CD4-positive, alpha-beta T cell (primary cell): ENCODE measurements at regions of chr12 and their contacts with region 1.

Region 1: GRCh38 chr12:67268896-67269631 is at the start of gene CAND1:
- DNase-seq: peak; percentile 90 to 99 (median 94)
- ATAC-seq: peak; percentile 77
- H3K4me3 ChIP-seq: peak within 1 kb of the TSS; percentile 91
- H3K4me3 Mint-ChIP-seq: peak within 1 kb of the TSS; percentile 94
- H3K27ac ChIP-seq: peak within 1 kb of the TSS; percentile 96 to 98
- H3K27ac Mint-ChIP-seq: peak within 1 kb of the TSS; percentile 97
- H3K4me1 ChIP-seq: peaks cover 24% of the 10 kb centered on the region
- H3K4me1 Mint-ChIP-seq: peaks cover 50% of the 10 kb centered on the region
- H3K27me3 ChIP-seq: no peaks in the 10 kb centered on the region
- H3K27me3 Mint-ChIP-seq: no peaks in the 10 kb centered on the region
- CTCF ChIP-seq: no peak
- total RNA-seq, gene CAND1: 118 to 124 TPM

Region 2: DNA sequence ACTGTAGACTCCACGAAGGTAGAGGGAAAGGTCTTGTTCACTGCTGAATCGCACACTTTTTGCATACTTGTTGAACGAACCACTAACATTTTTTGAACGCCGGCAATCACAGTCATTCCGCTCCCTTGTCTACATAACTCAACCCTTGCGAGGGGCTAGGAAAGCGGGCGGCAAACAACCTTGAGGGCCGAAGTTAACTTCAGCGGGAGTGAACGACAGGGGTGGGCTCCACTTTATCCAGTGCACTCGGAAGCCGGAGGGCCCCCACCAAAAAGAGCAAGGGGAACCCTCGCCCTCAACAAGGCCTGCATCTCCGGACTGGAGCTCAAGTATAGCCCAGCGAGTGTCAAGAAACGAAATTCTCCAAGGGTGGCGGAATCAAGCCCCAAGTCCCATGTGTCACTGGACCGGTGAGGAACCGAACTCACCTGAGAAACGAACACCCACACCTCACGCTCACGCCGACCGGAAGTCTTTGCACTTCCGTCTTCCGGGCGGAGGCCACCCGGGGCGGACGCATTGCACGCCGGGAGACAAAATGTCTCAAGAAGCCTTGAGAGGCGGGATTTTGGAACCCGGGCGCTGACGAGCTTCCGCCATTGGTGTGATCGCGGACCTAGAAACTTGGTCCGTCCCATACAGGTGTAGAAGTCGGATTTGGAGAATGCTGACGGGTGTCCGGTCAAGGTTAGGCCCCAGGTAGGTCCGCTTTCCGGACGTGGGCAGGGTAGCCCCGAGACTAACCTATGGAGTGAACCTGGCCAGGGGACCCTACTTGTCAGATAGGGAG is 1138.6 kb before region 1 on chr12 and contains the start of gene LLPH:
- CTCF ChIA-PET with region 1: no interaction called
- POLR2A ChIA-PET with region 1: interaction called, 9 read pairs
- intact Hi-C with region 1: loop called in 1 of 2 experiments (anchors 5 kb)
- DNase-seq: peak; percentile 78 to 94 (median 84)
- ATAC-seq: peak; percentile 90
- H3K4me3 ChIP-seq: peak within 1 kb of the TSS; percentile 96
- H3K4me3 Mint-ChIP-seq: peak within 1 kb of the TSS; percentile 95
- H3K27ac ChIP-seq: peak within 1 kb of the TSS; percentile 77 to 89
- H3K27ac Mint-ChIP-seq: peak within 1 kb of the TSS; percentile 96
- H3K4me1 ChIP-seq: peaks cover 13% of the 10 kb centered on the region
- H3K4me1 Mint-ChIP-seq: peaks cover 71% of the 10 kb centered on the region
- H3K27me3 ChIP-seq: no peaks in the 10 kb centered on the region
- H3K27me3 Mint-ChIP-seq: no peaks in the 10 kb centered on the region
- CTCF ChIP-seq: no peak
- total RNA-seq, gene LLPH: 27.3 to 31.0 TPM

Region 3: DNA sequence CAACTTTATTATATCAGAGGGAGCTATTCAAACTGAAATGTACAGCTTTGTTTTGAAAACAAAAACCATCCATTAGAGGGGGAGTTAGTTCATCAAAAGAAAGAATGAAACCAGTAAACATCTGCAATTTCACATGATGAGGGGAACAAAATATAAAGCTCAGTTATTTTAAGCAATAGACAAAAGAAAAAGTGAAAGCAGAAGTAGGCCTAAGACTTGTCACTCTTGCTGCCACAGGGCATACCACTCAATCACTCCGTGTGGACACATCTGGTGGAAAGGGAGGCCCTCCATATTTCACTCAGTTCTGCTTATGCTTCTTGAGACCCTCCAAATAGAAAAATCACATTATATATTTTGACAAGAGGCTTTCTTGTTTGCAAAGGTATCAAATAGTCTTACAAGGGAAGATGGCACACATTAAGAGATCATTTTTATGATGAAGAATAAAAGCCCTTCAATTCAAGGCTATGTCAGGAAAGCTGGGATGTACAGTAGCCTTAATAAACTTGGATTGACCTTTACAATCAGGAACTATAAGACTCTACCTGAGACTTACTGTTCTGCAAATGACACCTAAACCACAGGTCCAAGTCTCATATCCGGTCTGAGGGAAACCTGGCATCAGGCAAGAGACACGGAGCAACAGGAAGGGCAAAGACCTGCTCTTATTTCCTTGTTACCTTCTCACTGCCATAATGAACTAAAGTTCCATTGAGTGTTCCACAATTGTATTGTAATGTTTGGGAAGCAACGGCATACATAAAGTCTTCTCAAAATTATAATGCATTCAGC is 367.7 kb before region 1 on chr12:
- CTCF ChIA-PET with region 1: no interaction called
- POLR2A ChIA-PET with region 1: interaction called, 14 read pairs
- intact Hi-C with region 1: loop called in 1 of 2 experiments (anchors 10 kb)
- DNase-seq: peak in 4 of 14 experiments; percentile 12 to 43 (median 22)
- ATAC-seq: peak; percentile 41
- H3K4me3 ChIP-seq: no peak overlapping the region
- H3K4me3 Mint-ChIP-seq: peak overlapping the region; percentile 71
- H3K27ac ChIP-seq: no peak overlapping the region
- H3K27ac Mint-ChIP-seq: peak overlapping the region; percentile 32
- H3K4me1 ChIP-seq: no peaks in the 10 kb centered on the region
- H3K4me1 Mint-ChIP-seq: peaks cover 47% of the 10 kb centered on the region
- H3K27me3 ChIP-seq: no peaks in the 10 kb centered on the region
- H3K27me3 Mint-ChIP-seq: no peaks in the 10 kb centered on the region
- CTCF ChIP-seq: no peak

Region 4: GRCh38 chr12:67042697-67043131 is 226.3 kb before region 1 on chr12:
- CTCF ChIA-PET with region 1: no interaction called
- POLR2A ChIA-PET with region 1: no interaction called
- intact Hi-C with region 1: no loop called
- DNase-seq: no peak
- ATAC-seq: no peak
- H3K4me3 ChIP-seq: no peak overlapping the region
- H3K4me3 Mint-ChIP-seq: no peak overlapping the region
- H3K27ac ChIP-seq: no peak overlapping the region
- H3K27ac Mint-ChIP-seq: no peak overlapping the region
- H3K4me1 ChIP-seq: no peaks in the 10 kb centered on the region
- H3K4me1 Mint-ChIP-seq: no peaks in the 10 kb centered on the region
- H3K27me3 ChIP-seq: peaks cover 0 to 3% of the 10 kb centered on the region in 2 experiments
- H3K27me3 Mint-ChIP-seq: no peaks in the 10 kb centered on the region
- CTCF ChIP-seq: no peak

Region 5: GRCh38 chr12:67256649-67257048 is 12.4 kb before region 1 on chr12:
- CTCF ChIA-PET with region 1: interaction called, 4 read pairs
- POLR2A ChIA-PET with region 1: interaction called, 12 read pairs
- intact Hi-C with region 1: no loop called
- DNase-seq: no peak
- ATAC-seq: no peak
- H3K4me3 ChIP-seq: no peak overlapping the region
- H3K4me3 Mint-ChIP-seq: no peak overlapping the region
- H3K27ac ChIP-seq: no peak overlapping the region
- H3K27ac Mint-ChIP-seq: no peak overlapping the region
- H3K4me1 ChIP-seq: no peaks in the 10 kb centered on the region
- H3K4me1 Mint-ChIP-seq: no peaks in the 10 kb centered on the region
- H3K27me3 ChIP-seq: peaks cover 0 to 3% of the 10 kb centered on the region in 2 experiments
- H3K27me3 Mint-ChIP-seq: no peaks in the 10 kb centered on the region
- CTCF ChIP-seq: no peak

Region 6: GRCh38 chr12:67630373-67631088 is 361.5 kb after region 1 on chr12:
- CTCF ChIA-PET with region 1: no interaction called
- POLR2A ChIA-PET with region 1: interaction called, 15 read pairs
- intact Hi-C with region 1: no loop called
- DNase-seq: peak; percentile 67 to 98 (median 86)
- ATAC-seq: peak; percentile 99
- H3K4me3 ChIP-seq: peak overlapping the region; percentile 19
- H3K4me3 Mint-ChIP-seq: peak overlapping the region; percentile 73
- H3K27ac ChIP-seq: peak overlapping the region; percentile 69 to 77
- H3K27ac Mint-ChIP-seq: peak overlapping the region; percentile 90
- H3K4me1 ChIP-seq: peaks cover 44% of the 10 kb centered on the region
- H3K4me1 Mint-ChIP-seq: peaks cover 91% of the 10 kb centered on the region
- H3K27me3 ChIP-seq: no peaks in the 10 kb centered on the region
- H3K27me3 Mint-ChIP-seq: no peaks in the 10 kb centered on the region
- CTCF ChIP-seq: no peak

Region 7: GRCh38 chr12:69239352-69239921 is 1970.4 kb after region 1 on chr12 and contains the start of gene CPSF6:
- CTCF ChIA-PET with region 1: no interaction called
- POLR2A ChIA-PET with region 1: interaction called, 9 read pairs
- intact Hi-C with region 1: loop called in 1 of 2 experiments (anchors 5 kb)
- DNase-seq: peak; percentile 93 to 99 (median 96)
- ATAC-seq: peak; percentile 85
- H3K4me3 ChIP-seq: peak within 1 kb of the TSS; percentile 87
- H3K4me3 Mint-ChIP-seq: peak within 1 kb of the TSS; percentile 97
- H3K27ac ChIP-seq: peak within 1 kb of the TSS; percentile 85 to 86
- H3K27ac Mint-ChIP-seq: peak within 1 kb of the TSS; percentile 99
- H3K4me1 ChIP-seq: peaks cover 30% of the 10 kb centered on the region
- H3K4me1 Mint-ChIP-seq: peaks cover 59% of the 10 kb centered on the region
- H3K27me3 ChIP-seq: no peaks in the 10 kb centered on the region
- H3K27me3 Mint-ChIP-seq: no peaks in the 10 kb centered on the region
- CTCF ChIP-seq: no peak
- total RNA-seq, gene CPSF6: 80.9 to 86.7 TPM